Common myeloid progenitor, CD34-positive (primary cell): ENCODE measurements at regions of chr2 and their contacts with region 1.

Region 1: DNA sequence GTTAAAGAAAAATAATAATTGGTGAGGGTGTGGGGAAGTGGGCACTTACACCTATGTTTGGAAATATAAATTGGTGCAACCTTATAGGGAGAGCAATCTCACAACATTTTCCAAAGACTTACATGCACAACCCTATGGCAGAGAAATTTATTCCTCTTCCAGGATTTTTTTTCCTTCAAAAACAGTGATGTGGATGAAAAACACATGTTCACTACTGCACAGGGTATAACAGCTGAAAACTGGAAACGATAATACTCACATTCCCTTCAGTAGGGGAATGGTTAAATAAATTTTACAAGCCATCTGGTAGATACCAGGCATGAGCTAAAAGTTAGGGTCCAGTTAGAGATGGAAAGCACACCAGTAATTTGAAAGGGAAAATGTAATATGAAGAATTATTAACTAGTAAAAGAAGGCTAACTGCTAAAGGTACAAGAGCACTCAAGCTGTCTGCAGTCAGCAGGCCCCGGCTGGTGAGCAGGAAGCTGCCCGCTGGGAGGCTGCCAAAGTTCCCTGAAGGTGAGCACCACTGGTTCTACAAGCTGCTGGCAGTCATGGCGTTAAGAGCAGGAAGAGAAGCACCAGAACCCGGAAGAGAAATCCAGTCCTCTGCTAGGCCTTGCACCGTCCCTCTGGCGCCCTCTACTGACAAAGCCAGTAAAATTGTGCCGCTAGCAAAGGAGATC is 28.4 kb upstream of the CASP8 start:
- DNase-seq: peak; percentile 96 to 97 (median 97)
- H3K4me3 ChIP-seq: peak overlapping the region in 3 of 7 experiments; percentile 4 to 53 (median 35)
- H3K27ac ChIP-seq: peak overlapping the region in 1 of 2 experiments; percentile 62
- H3K4me1 ChIP-seq: peaks cover 31 to 73% (median 57%) of the 10 kb centered on the region in 4 experiments
- H3K27me3 ChIP-seq: no peaks in the 10 kb centered on the region

Region 2: DNA sequence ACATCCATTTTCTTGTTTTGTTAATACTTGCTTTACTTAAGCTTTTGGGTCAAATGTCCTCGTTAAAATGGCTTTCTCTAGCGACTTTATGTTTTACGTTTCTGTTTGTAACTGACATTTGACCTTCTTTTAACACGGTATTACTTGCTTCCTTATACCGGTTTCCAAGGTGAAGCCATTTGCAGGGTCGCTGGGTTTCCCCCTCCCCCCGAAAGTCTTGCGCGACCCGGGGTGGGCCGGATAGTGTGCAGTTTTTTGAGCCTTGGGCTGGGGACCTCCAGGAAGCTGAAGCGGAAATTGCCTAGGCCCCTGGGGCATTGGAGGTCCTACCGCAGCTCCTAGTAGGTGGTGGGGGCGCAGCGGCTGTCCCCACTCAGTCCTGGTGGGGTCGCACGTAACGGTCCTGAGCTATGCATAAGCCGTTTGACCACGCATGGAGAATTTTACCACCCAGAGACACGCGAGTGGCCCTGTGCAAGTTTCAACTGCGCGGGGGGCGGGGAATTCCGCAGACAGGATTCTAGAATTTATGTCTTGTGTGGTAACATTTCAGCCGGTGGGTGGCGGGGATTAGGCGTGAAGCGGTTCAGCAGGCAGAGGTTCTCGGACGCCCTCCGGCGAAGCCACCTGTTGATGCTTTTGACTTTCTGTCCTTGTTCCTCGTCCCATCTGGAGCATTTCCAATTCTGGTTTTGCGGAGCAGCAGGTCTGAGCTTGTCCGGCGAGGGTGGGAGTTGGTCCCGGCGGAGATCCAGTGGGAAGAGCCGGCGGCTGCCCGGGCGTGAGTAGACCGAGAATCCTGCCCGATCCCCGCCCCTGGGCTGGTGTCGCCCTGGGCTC is 113.6 kb before region 1 on chr2:
- CTCF ChIA-PET with region 1: interaction called, 23 read pairs
- POLR2A ChIA-PET with region 1: no interaction called
- DNase-seq: peak; percentile 94 to 95 (median 94)
- H3K4me3 ChIP-seq: peak overlapping the region; percentile 88 to 100 (median 95)
- H3K27ac ChIP-seq: peak overlapping the region; percentile 93 to 97
- H3K4me1 ChIP-seq: peaks cover 33 to 69% (median 62%) of the 10 kb centered on the region in 4 experiments
- H3K27me3 ChIP-seq: no peaks in the 10 kb centered on the region

Region 3: GRCh38 chr2:201151127-201151981 is 80.6 kb before region 1 on chr2:
- CTCF ChIA-PET with region 1: no interaction called
- POLR2A ChIA-PET with region 1: no interaction called
- DNase-seq: peak; percentile 42 to 86 (median 77)
- H3K4me3 ChIP-seq: no peak overlapping the region
- H3K27ac ChIP-seq: peak overlapping the region; percentile 29 to 76
- H3K4me1 ChIP-seq: peaks cover 0 to 24% (median 14%) of the 10 kb centered on the region in 4 experiments
- H3K27me3 ChIP-seq: no peaks in the 10 kb centered on the region

Region 4: GRCh38 chr2:201194097-201194496 is 37.8 kb before region 1 on chr2:
- CTCF ChIA-PET with region 1: interaction called, 43 read pairs
- POLR2A ChIA-PET with region 1: interaction called, 14 read pairs
- DNase-seq: peak in 2 of 3 donors; percentile 67 to 74
- H3K4me3 ChIP-seq: peak overlapping the region in 4 of 7 experiments; percentile 3 to 53 (median 22)
- H3K27ac ChIP-seq: peak overlapping the region in 1 of 2 experiments; percentile 65
- H3K4me1 ChIP-seq: peaks cover 43 to 77% (median 58%) of the 10 kb centered on the region in 4 experiments
- H3K27me3 ChIP-seq: no peaks in the 10 kb centered on the region

Region 5: DNA sequence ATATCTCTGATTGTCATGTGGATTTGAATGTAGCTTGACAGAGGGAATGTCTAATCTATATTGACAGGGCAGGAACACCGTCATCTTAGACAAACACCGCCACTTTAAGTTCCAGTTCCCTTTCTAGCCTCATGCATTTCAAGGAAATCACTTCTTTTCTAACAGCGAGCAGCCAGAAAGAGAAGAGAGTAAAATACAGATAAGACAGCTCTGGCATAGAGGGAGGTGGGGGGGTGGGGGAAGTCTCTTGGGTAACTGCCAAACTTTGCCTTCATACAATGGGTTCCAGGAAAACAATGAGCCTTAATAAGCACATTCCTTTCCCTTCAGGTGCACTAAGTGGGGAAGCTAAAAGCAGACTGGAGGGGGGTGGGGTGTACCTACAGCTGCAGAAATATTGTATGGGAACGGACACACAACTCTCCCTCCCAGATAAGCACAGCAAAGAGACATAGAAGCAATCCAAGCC is 11.8 kb before region 1 on chr2:
- CTCF ChIA-PET with region 1: interaction called, 65 read pairs
- POLR2A ChIA-PET with region 1: interaction called, 3 read pairs
- DNase-seq: peak in 2 of 3 donors; percentile 62 to 74
- H3K4me3 ChIP-seq: peak overlapping the region in 3 of 7 experiments; percentile 5 to 39 (median 35)
- H3K27ac ChIP-seq: peak overlapping the region in 1 of 2 experiments; percentile 56
- H3K4me1 ChIP-seq: peaks cover 13 to 42% (median 36%) of the 10 kb centered on the region in 4 experiments
- H3K27me3 ChIP-seq: no peaks in the 10 kb centered on the region

Region 6: GRCh38 chr2:201270293-201271001 is 38.5 kb after region 1 on chr2:
- CTCF ChIA-PET with region 1: interaction called, 33 read pairs
- POLR2A ChIA-PET with region 1: no interaction called
- DNase-seq: no peak
- H3K4me3 ChIP-seq: no peak overlapping the region
- H3K27ac ChIP-seq: no peak overlapping the region
- H3K4me1 ChIP-seq: peaks cover 0 to 4% (median 0%) of the 10 kb centered on the region in 4 experiments
- H3K27me3 ChIP-seq: no peaks in the 10 kb centered on the region